ENCODE measurements at regions of chrX and their contacts with region 1.

Region 1: DNA sequence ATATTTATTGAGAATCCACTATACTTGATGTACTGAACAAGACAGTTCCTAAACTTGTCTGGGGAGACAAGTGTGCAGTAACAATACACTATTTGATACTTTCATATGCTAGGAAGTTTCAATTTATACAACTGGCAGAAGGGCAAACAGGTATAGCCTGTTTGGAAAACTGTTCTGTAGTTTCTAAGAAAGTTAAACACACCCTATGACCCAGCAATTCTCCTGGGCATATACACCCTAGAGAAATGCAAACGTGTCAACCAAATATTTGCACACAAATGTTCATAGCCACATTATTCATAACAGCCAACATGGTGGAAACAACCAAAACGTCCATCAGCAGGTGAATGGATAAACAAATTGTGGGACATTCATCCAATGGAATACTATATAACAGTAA is 64.0 kb upstream of the BRS3 start:
- DNase-seq: no peak
- ATAC-seq: no peak
- H3K4me3 ChIP-seq: no peak overlapping the region
- H3K4me3 Mint-ChIP-seq: no peak overlapping the region
- H3K27ac ChIP-seq: no peak overlapping the region
- H3K27ac Mint-ChIP-seq: no peak overlapping the region
- H3K4me1 ChIP-seq: no peaks in the 10 kb centered on the region
- H3K4me1 Mint-ChIP-seq: no peaks in the 10 kb centered on the region
- H3K27me3 ChIP-seq: no peaks in the 10 kb centered on the region
- H3K27me3 Mint-ChIP-seq: peaks cover 0 to 3% (median 0%) of the 10 kb centered on the region in 5 donors

Region 2: GRCh38 chrX:136369377-136369776 is 54.3 kb before region 1 on chrX:
- CTCF ChIA-PET with region 1: no interaction called
- POLR2A ChIA-PET with region 1: no interaction called
- intact Hi-C with region 1: loop called in 1 of 2 experiments (anchors 10 kb)
- DNase-seq: no peak
- ATAC-seq: no peak
- H3K4me3 ChIP-seq: no peak overlapping the region
- H3K4me3 Mint-ChIP-seq: no peak overlapping the region
- H3K27ac ChIP-seq: no peak overlapping the region
- H3K27ac Mint-ChIP-seq: no peak overlapping the region
- H3K4me1 ChIP-seq: no peaks in the 10 kb centered on the region
- H3K4me1 Mint-ChIP-seq: no peaks in the 10 kb centered on the region
- H3K27me3 ChIP-seq: no peaks in the 10 kb centered on the region
- H3K27me3 Mint-ChIP-seq: peaks cover 0 to 10% (median 5%) of the 10 kb centered on the region in 5 donors

Region 3: DNA sequence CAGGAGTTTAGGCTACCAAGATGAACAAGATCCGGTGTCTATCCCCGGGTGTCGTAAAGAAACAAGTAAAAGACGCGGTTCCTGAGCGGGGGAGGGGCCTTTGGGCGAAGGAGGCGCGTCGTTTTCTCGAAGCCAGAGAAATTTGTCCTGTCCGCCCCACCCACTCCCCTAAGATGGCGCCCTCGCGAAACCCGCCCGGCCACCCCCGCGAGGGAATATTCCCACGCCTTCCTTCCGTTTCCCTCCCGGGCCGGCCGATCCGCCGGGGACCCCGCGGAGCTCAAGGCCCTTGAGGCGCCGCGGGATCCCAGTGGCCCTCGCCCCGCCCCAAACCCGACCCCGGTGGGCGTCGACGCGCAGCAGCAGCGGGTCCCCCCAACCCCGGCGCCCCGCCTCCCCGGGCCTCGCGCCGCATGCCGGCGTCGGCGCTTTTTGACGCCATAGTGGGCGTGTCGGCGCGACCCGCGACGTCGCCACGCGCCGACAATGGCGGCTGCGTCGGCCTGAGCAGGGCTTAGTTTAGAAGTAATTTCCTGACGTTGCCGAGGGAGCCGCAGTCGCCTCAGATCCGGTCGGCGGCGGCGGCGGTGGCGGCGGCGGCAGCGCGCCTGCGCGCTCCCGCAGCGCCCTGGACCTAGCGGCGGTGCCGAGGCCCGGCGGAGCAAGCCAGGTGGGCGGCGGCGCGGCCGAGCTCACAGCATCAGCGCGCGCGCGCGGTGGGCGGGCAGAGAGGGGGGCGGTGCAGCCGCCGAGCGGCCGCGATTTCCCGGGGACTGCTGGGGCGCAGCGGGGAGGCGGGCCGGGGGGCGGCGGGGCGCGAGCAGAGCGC is 73.3 kb after region 1 on chrX and contains the start of gene HTATSF1:
- CTCF ChIA-PET with region 1: no interaction called
- POLR2A ChIA-PET with region 1: no interaction called
- intact Hi-C with region 1: no loop called
- DNase-seq: peak; percentile 72 to 92 (median 88)
- ATAC-seq: peak; percentile 89
- H3K4me3 ChIP-seq: peak within 1 kb of the TSS; percentile 69
- H3K4me3 Mint-ChIP-seq: peak within 1 kb of the TSS; percentile 84 to 97 (median 94)
- H3K27ac ChIP-seq: peak within 1 kb of the TSS; percentile 86
- H3K27ac Mint-ChIP-seq: peak within 1 kb of the TSS; percentile 93 to 99 (median 97)
- H3K4me1 ChIP-seq: peaks cover 7 to 10% of the 10 kb centered on the region in 2 donors
- H3K4me1 Mint-ChIP-seq: peaks cover 6 to 24% (median 17%) of the 10 kb centered on the region in 7 donors
- H3K27me3 ChIP-seq: no peaks in the 10 kb centered on the region
- H3K27me3 Mint-ChIP-seq: peaks cover 0 to 5% (median 0%) of the 10 kb centered on the region in 5 donors
- total RNA-seq, gene HTATSF1: 25.9 to 67.2 (median 29.0) TPM